CD4-positive, alpha-beta memory T cell (primary cell): ENCODE measurements at regions of chr12 and their contacts with region 1.

Region 1: GRCh38 chr12:48988030-48988649 is 10.0 kb downstream of the WNT1 start:
- DNase-seq: peak; percentile 64 to 74 (median 67)
- H3K4me3 ChIP-seq: no peak overlapping the region
- H3K4me3 Mint-ChIP-seq: peak overlapping the region in 2 of 8 donors; percentile 7 to 35
- H3K27ac ChIP-seq: no peak overlapping the region
- H3K27ac Mint-ChIP-seq: peak overlapping the region in 3 of 7 donors; percentile 21 to 65 (median 45)
- H3K4me1 ChIP-seq: peaks cover 6% of the 10 kb centered on the region
- H3K4me1 Mint-ChIP-seq: peaks cover 10 to 15% (median 11%) of the 10 kb centered on the region in 4 donors
- H3K27me3 ChIP-seq: peaks cover 4% of the 10 kb centered on the region
- H3K27me3 Mint-ChIP-seq: peaks cover 21 to 22% of the 10 kb centered on the region in 2 donors

Region 2: DNA sequence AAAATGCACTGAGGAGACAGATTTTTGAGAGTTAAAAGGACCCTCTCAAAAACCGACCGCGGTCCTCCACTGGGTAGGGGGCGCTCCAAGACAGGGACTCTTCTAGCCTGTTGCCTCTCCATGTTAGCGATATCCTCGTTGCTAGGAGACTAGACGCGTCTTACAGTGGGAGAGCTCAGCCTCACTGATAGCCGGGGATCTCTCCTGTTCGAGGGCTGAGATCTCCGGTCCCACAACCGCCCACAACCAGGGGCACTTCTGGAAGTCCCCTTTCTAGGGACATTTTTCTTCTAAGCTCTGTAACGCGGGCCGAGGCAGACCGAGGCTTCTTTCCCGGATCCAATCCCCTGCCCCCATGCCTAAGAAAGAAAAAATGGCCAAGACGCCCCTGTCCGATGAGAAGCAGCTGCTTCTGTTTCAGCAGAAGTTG is 84.1 kb before region 1 on chr12:
- CTCF ChIA-PET with region 1: interaction called, 16 read pairs
- POLR2A ChIA-PET with region 1: interaction called, 5 read pairs
- intact Hi-C with region 1: loop called (anchors 1 kb)
- DNase-seq: peak; percentile 81 to 89 (median 82)
- H3K4me3 ChIP-seq: peak overlapping the region in 1 of 2 donors; percentile 36
- H3K4me3 Mint-ChIP-seq: peak overlapping the region; percentile 68 to 86 (median 82)
- H3K27ac ChIP-seq: no peak overlapping the region
- H3K27ac Mint-ChIP-seq: peak overlapping the region in 6 of 7 donors; percentile 76 to 92 (median 89)
- H3K4me1 ChIP-seq: peaks cover 6% of the 10 kb centered on the region
- H3K4me1 Mint-ChIP-seq: peaks cover 2 to 13% (median 7%) of the 10 kb centered on the region in 4 donors
- H3K27me3 ChIP-seq: no peaks in the 10 kb centered on the region
- H3K27me3 Mint-ChIP-seq: peaks cover 0 to 4% of the 10 kb centered on the region in 2 donors

Region 3: DNA sequence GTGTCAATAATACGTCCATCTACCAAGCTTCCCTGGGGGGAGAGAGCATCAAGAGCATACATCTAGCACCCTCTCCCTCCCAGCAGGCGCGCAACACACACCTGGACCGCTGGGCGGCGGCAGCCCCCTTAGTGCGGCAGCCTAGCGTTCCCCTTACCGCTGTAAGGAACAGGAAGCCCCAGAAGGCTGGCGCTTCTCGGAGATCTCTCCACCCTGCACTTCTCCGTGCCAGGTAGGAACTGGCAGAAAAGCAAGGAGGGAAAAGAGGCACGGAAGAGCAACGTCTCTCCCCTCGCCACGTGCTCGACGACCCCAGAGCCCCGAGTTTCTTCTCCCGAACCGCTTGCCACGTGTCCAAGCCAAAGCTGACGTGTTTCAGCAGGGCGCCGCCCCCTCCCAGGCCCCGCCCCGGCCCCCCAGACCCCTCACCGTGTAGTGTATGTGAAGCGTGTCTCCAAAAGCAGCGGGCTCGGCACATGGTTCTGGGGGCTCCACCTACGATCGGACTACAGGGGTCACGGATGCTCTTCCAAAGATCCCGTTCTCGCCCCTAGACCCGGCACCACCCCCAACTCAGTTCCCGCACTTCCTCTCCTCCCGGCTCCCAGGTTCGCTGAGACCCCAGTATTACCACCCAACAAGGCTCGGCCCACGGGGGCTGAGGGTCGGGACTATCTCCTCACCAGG is 63.4 kb before region 1 on chr12:
- CTCF ChIA-PET with region 1: interaction called, 12 read pairs
- POLR2A ChIA-PET with region 1: interaction called, 8 read pairs
- intact Hi-C with region 1: loop called (anchors 2 kb)
- DNase-seq: peak; percentile 79 to 85 (median 81)
- H3K4me3 ChIP-seq: peak overlapping the region; percentile 20 to 97
- H3K4me3 Mint-ChIP-seq: peak overlapping the region; percentile 95 to 98 (median 97)
- H3K27ac ChIP-seq: peak overlapping the region; percentile 95
- H3K27ac Mint-ChIP-seq: peak overlapping the region; percentile 96 to 100 (median 99)
- H3K4me1 ChIP-seq: peaks cover 34% of the 10 kb centered on the region
- H3K4me1 Mint-ChIP-seq: peaks cover 36 to 66% (median 52%) of the 10 kb centered on the region in 4 donors
- H3K27me3 ChIP-seq: no peaks in the 10 kb centered on the region
- H3K27me3 Mint-ChIP-seq: no peaks in the 10 kb centered on the region

Region 4: GRCh38 chr12:48957141-48958048 is 30.7 kb before region 1 on chr12 and contains the start of gene ARF3:
- CTCF ChIA-PET with region 1: interaction called, 27 read pairs
- POLR2A ChIA-PET with region 1: interaction called, 9 read pairs
- intact Hi-C with region 1: no loop called
- DNase-seq: peak; percentile 91 to 93 (median 93)
- H3K4me3 ChIP-seq: peak within 1 kb of the TSS; percentile 45 to 71
- H3K4me3 Mint-ChIP-seq: peak within 1 kb of the TSS; percentile 92 to 98 (median 96)
- H3K27ac ChIP-seq: peak within 1 kb of the TSS; percentile 73
- H3K27ac Mint-ChIP-seq: peak within 1 kb of the TSS; percentile 91 to 97 (median 95)
- H3K4me1 ChIP-seq: peaks cover 34% of the 10 kb centered on the region
- H3K4me1 Mint-ChIP-seq: peaks cover 27 to 54% (median 38%) of the 10 kb centered on the region in 4 donors
- H3K27me3 ChIP-seq: no peaks in the 10 kb centered on the region
- H3K27me3 Mint-ChIP-seq: peaks cover 1 to 2% of the 10 kb centered on the region in 2 donors
- total RNA-seq, gene ARF3: 69.8 to 77.5 TPM

Region 5: DNA sequence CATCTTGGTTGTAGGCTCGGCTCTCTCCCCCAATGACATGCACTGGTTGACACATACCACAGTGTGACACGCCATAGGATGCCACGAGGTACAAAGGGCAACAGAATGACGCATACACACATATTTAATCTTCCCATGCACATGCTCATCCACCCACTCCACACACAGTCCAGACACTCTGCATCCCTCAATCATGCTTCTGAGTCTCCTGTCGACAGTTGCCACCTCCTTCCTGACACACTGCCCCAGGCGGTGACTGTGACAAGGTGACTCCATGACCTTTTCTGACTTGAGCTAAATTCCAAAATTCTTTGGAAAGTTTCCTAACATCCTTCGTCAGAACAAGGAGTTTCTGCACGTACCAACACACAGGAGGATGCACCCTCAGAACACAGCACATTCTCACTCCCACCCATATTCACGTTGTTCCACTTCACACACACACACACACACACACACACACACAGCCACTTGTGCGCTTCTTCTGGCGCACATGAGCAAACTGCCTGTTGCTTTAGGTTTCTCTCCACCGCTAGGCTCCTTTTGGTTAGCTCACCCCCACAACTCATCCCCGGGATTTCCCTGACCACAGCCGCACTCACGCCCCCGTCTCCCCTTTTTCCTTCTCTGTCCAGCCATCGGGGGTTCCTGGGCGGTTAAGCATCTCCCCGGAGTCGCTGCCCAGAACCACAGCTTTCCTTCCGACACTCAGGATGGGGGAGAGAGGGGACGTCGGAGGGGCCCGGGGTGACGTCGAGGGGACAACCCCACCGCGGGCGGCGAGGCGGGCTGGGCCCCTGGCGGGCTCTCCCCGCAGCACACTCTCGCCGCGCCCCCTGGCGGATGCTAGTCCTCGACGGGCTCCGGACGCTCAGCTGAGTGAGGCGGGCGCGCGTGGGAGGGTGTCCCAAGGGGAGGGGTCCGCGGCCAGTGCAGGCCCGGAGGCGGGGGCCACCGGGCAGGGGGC is 10.5 kb before region 1 on chr12:
- CTCF ChIA-PET with region 1: interaction called, 244 read pairs
- POLR2A ChIA-PET with region 1: interaction called, 29 read pairs
- intact Hi-C with region 1: loop called (anchors 1 kb)
- DNase-seq: peak; percentile 75 to 93 (median 80)
- H3K4me3 ChIP-seq: no peak overlapping the region
- H3K4me3 Mint-ChIP-seq: peak overlapping the region; percentile 48 to 80 (median 60)
- H3K27ac ChIP-seq: no peak overlapping the region
- H3K27ac Mint-ChIP-seq: peak overlapping the region; percentile 57 to 97 (median 83)
- H3K4me1 ChIP-seq: peaks cover 50% of the 10 kb centered on the region
- H3K4me1 Mint-ChIP-seq: peaks cover 35 to 65% (median 46%) of the 10 kb centered on the region in 4 donors
- H3K27me3 ChIP-seq: peaks cover 17% of the 10 kb centered on the region
- H3K27me3 Mint-ChIP-seq: peaks cover 11 to 26% of the 10 kb centered on the region in 2 donors

Region 6: DNA sequence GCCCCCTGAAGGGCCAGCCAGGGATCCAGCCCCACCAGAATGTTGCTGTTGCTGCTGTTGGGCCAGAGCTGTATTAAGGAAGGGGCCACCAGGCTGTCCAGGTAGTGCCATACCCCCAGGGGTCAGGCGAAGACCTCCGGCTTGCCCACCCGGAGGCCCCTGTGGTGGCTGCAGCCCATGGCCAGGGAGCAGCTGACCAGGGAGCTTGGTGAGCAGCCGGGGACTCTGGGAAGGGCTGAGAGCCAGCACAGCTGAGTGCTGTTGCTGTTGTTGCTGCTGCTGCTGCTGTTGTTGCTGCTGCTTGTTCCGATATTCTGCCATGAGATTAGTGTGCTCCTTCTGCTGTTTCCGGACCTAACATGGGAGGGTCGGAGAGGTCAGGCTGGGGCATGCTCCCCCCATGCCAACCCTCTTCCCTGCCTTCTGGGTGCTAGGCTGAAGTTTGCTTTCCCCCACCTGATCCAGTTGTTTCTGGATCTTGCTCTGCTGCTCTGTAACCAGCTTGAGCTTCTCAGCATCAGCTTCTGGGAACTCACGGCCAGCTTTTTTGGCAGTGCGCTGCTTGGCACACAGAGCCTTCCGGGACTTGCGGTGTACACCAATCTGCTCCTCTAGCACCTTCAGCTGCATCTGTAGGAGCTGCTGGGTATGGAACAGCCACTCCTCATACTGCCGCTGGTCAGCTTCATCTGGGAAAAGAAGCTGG is 45.6 kb after region 1 on chr12:
- CTCF ChIA-PET with region 1: interaction called, 10 read pairs
- POLR2A ChIA-PET with region 1: no interaction called
- intact Hi-C with region 1: no loop called
- DNase-seq: no peak
- H3K4me3 ChIP-seq: no peak overlapping the region
- H3K4me3 Mint-ChIP-seq: no peak overlapping the region
- H3K27ac ChIP-seq: no peak overlapping the region
- H3K27ac Mint-ChIP-seq: peak overlapping the region in 2 of 7 donors; percentile 60 to 81
- H3K4me1 ChIP-seq: no peaks in the 10 kb centered on the region
- H3K4me1 Mint-ChIP-seq: peaks cover 0 to 7% (median 0%) of the 10 kb centered on the region in 4 donors
- H3K27me3 ChIP-seq: no peaks in the 10 kb centered on the region
- H3K27me3 Mint-ChIP-seq: no peaks in the 10 kb centered on the region

Region 7: GRCh38 chr12:49055981-49056754 is 68.0 kb after region 1 on chr12:
- CTCF ChIA-PET with region 1: no interaction called
- POLR2A ChIA-PET with region 1: no interaction called
- intact Hi-C with region 1: no loop called
- DNase-seq: peak; percentile 54 to 74 (median 58)
- H3K4me3 ChIP-seq: peak overlapping the region in 1 of 2 donors; percentile 13
- H3K4me3 Mint-ChIP-seq: peak overlapping the region; percentile 73 to 96 (median 92)
- H3K27ac ChIP-seq: peak overlapping the region; percentile 90
- H3K27ac Mint-ChIP-seq: peak overlapping the region; percentile 76 to 96 (median 89)
- H3K4me1 ChIP-seq: peaks cover 51% of the 10 kb centered on the region
- H3K4me1 Mint-ChIP-seq: peaks cover 48 to 67% (median 56%) of the 10 kb centered on the region in 4 donors
- H3K27me3 ChIP-seq: no peaks in the 10 kb centered on the region
- H3K27me3 Mint-ChIP-seq: no peaks in the 10 kb centered on the region